ENCODE measurements at regions of chr12 and their contacts with region 1.

Region 1: GRCh38 chr12:53984901-53985709 is at the start of gene HOXC10:
- DNase-seq: peak; percentile 93 to 97
- ATAC-seq: peak; percentile 74 to 83
- H3K4me3 ChIP-seq: peak within 1 kb of the TSS; percentile 60
- H3K27ac ChIP-seq: peak within 1 kb of the TSS; percentile 88 to 89
- H3K4me1 ChIP-seq: peaks cover 24% of the 10 kb centered on the region
- CTCF ChIP-seq: peak; percentile 84
- EP300 ChIP-seq: no peak
- POLR2A ChIP-seq: no peak
- RAD21 ChIP-seq: peak; percentile 90 to 94
- polyA plus RNA-seq, gene HOXC10: 2.5 and 2.9 TPM in 2 replicates

Region 2: GRCh38 chr12:53746592-53747092 is 238.5 kb before region 1 on chr12:
- CTCF ChIA-PET with region 1: interaction called, 58 read pairs
- POLR2A ChIA-PET with region 1: no interaction called
- DNase-seq: peak; percentile 88 to 91
- ATAC-seq: peak; percentile 92 to 95
- H3K4me3 ChIP-seq: no peak overlapping the region
- H3K27ac ChIP-seq: peak overlapping the region in 1 of 2 experiments; percentile 49; a peak in 1 of 6 replicates
- H3K4me1 ChIP-seq: no peaks in the 10 kb centered on the region
- CTCF ChIP-seq: peak; percentile 100
- EP300 ChIP-seq: no peak
- POLR2A ChIP-seq: no peak
- RAD21 ChIP-seq: peak; percentile 87 to 90

Region 3: DNA sequence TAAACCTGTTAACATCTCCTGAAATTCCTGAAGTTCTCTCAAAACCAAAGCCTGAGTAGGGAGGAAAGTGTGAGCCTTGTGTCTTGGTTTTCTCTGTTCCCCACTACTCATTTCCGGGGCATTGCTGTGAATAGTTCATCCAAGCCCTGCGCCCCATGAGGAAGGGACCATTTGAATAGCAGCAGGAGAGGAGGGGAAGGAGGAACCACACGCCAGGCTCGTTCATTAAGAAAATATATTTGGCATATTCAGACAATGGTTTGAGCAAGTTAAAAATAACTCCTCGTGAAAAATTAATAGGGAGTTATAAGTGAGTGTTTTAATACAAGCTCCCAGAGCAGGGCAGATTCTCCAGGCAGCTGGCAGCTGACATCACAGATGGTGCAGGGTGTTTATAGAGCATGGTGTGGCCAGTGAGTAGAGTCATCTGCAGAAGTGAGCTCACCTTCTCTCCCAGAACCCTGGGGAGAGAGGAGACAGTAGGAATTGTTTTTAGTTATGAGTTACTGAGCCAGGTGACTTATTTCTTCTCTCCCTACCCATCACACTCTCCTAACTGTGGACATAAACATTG is 203.8 kb before region 1 on chr12:
- CTCF ChIA-PET with region 1: interaction called, 11 read pairs
- POLR2A ChIA-PET with region 1: no interaction called
- DNase-seq: no peak
- ATAC-seq: no peak
- H3K4me3 ChIP-seq: no peak overlapping the region
- H3K27ac ChIP-seq: no peak overlapping the region
- H3K4me1 ChIP-seq: 0 out of 3 replicates have a peak, but pooled peaks cover 2% of the 10 kb centered on the region
- CTCF ChIP-seq: no peak
- EP300 ChIP-seq: no peak
- POLR2A ChIP-seq: no peak
- RAD21 ChIP-seq: no peak

Region 4: DNA sequence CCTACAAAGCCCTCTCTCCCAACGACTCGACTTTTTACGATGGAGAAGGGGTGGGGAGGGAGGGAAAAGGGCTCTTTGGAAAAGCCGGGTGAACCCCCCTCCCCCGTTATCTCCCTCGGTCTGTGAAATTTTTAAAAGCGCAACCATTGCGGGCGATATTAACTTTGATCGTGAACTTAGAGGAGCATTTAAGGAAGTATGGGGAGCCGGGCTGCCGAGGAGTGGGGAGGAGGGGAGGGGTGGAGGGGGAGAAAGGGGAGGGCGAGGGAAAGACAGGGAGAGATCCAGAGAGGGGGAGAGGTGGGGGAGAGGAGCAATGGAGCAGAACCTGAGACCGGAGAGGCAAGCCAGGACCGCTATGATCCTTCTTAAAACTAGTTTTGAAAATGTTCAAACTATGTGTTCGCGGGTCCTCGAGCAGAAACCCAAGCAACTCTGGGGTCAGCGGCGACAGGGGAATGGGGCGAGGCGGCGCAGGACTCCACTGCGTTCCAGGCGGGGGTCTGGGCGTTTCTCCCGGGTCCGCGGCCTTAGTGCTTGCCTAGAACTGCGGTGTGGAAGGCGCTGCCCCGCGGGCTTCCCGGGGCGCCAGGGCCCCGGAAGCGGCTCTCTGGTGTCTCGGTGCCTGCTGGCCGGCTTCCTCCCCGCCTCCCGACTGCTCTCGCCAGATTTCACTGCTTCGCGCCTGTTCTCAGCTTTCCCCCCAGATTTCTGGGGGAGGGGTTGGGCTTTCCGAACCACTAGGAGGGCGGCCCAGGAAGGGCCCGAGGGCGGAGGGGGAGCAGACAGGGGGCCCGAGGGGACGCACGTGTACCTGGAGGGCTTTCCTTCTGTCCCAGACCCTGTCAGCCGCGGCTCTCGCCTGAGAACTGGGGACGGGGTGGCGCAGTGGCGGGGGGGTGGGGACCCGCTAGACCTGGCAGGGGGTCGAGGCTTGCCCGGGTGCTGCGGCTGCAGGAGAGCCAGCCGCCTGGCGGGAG is 10.7 kb before region 1 on chr12 and contains the start of gene HOTAIR:
- CTCF ChIA-PET with region 1: interaction called, 14 read pairs
- POLR2A ChIA-PET with region 1: interaction called, 3 read pairs
- DNase-seq: peak; percentile 39 to 63
- ATAC-seq: peak; percentile 70 to 78
- H3K4me3 ChIP-seq: peak within 1 kb of the TSS; percentile 57
- H3K27ac ChIP-seq: peak within 1 kb of the TSS; percentile 83 to 95
- H3K4me1 ChIP-seq: peaks cover 27% of the 10 kb centered on the region
- CTCF ChIP-seq: no peak
- EP300 ChIP-seq: no peak
- POLR2A ChIP-seq: peak; percentile 32; the same call in 1 of the 2 replicates
- RAD21 ChIP-seq: no peak
- polyA plus RNA-seq, gene HOTAIR: 0.34 and 0.67 TPM in 2 replicates

Region 5: DNA sequence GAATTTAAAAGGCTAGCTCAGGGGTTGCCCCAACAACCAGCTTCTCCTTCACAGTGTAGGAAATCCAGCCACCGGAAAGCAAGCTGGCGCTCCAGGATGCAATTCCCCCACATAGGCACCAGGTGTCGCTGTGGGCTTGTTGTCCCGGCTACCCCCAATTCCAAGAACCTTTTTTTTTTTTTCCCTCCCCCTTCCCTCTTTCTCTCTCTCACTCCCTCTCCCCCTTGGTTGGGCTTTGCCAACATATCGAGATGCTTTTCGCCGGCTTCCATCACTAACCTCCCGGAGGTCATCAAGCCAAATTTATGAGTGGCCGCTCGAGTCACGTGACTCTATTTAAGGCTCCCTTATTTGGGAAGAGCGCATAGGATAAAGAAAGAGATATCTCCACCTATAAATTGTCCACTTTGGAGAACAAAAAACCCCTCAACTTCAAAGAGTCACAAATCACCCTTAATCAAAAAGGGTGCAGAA is 47.6 kb after region 1 on chr12 and contains the start of gene HOXC5:
- CTCF ChIA-PET with region 1: interaction called, 16 read pairs
- POLR2A ChIA-PET with region 1: no interaction called
- DNase-seq: peak; percentile 87 to 92
- ATAC-seq: peak; percentile 40 to 59
- H3K4me3 ChIP-seq: peak within 1 kb of the TSS; percentile 56
- H3K27ac ChIP-seq: peak within 1 kb of the TSS; percentile 76 to 93
- H3K4me1 ChIP-seq: peaks cover 18% of the 10 kb centered on the region
- CTCF ChIP-seq: peak; percentile 98
- EP300 ChIP-seq: no peak
- POLR2A ChIP-seq: no peak
- RAD21 ChIP-seq: peak; percentile 92 to 94
- polyA plus RNA-seq, gene HOXC5: 0.41 and 0.49 TPM in 2 replicates

Region 6: DNA sequence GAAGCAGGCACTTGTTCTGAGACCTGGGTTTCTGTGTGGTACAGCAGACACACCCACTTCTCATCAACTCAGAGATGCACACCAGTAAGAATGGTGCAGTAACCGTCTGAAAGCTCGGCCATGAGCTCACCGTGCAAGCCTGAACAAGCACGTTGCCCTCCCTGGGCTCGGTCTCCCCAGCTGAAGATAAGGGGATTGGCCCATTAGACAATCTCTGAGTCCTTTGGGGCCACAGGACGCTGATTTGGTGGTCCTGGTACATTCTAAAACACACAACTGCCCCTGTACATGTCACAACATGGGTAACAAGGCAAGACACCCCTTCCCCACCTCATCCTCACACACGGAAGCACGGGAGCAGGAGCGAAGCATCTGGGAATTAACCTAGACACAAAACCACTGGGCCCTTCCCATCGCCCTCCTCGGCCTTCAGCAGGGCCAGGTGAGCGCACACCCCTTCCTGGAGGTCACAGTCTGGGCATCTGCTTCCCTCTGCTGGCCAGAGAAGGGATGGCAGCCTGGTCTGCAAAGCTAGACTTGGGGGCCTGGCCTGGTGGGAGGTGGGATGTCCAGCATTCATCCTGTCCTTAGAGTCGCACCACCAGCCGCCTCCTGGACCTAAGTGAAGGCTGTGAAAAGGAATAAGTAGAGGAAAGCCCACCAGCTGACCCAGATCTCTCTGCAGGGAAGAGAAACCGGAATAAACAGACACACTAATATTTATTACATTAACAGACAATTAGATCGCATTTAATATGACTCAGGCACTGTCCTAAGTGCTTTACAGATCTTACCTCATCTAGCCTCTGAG is 222.6 kb after region 1 on chr12:
- CTCF ChIA-PET with region 1: interaction called, 1,074 read pairs
- POLR2A ChIA-PET with region 1: interaction called, 3 read pairs
- DNase-seq: peak; percentile 80 to 81
- ATAC-seq: peak; percentile 81 to 95
- H3K4me3 ChIP-seq: no peak overlapping the region
- H3K27ac ChIP-seq: no peak overlapping the region
- H3K4me1 ChIP-seq: no peaks in the 10 kb centered on the region
- CTCF ChIP-seq: peak; percentile 81
- EP300 ChIP-seq: no peak
- POLR2A ChIP-seq: no peak
- RAD21 ChIP-seq: peak; percentile 83 to 92

Region 7: DNA sequence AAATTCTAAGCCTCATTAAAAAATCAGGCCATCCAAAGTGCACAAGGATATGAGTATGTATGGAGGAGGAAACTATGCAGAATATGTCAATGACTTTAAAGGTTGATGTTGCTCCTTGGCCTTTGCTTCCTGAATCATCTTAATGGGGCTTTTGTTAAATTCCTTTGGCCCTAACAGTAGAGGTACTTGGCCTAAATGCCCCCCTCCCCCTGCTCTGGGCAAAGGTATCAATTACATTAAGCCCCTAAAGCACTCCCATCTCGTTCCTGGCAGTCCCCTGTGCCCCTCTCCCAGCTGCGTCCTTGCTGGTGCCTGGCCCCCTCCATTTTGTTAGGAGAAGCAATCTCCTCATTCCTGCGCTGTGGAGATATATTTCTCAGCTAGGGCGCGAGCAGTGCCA is 344.7 kb after region 1 on chr12:
- CTCF ChIA-PET with region 1: no interaction called
- POLR2A ChIA-PET with region 1: no interaction called
- DNase-seq: no peak
- ATAC-seq: no peak
- H3K4me3 ChIP-seq: no peak overlapping the region
- H3K27ac ChIP-seq: 0 out of 6 replicates have a peak overlapping the region, but pooled peaks of 1 of the 2 experiments have one; percentile 22
- H3K4me1 ChIP-seq: peaks cover 49% of the 10 kb centered on the region
- CTCF ChIP-seq: no peak
- EP300 ChIP-seq: no peak
- POLR2A ChIP-seq: no peak
- RAD21 ChIP-seq: no peak

Measured in A549 (cell line).